ENCODE measurements at regions of chr9 and their contacts with region 1.

Region 1: GRCh38 chr9:32384364-32385151 is at the start of gene ACO1:
- DNase-seq: peak; percentile 77 to 89 (median 84)
- H3K4me3 ChIP-seq: peak within 1 kb of the TSS; percentile 79 to 91
- H3K4me3 Mint-ChIP-seq: peak within 1 kb of the TSS; percentile 81 to 90 (median 88)
- H3K27ac ChIP-seq: peak within 1 kb of the TSS; percentile 55
- H3K27ac Mint-ChIP-seq: peak within 1 kb of the TSS in 6 of 7 donors; percentile 3 to 83 (median 58)
- H3K4me1 ChIP-seq: peaks cover 20% of the 10 kb centered on the region
- H3K4me1 Mint-ChIP-seq: peaks cover 12 to 20% (median 17%) of the 10 kb centered on the region in 4 donors
- H3K27me3 ChIP-seq: no peaks in the 10 kb centered on the region
- H3K27me3 Mint-ChIP-seq: peaks cover 3 to 7% of the 10 kb centered on the region in 2 donors
- total RNA-seq, gene ACO1: 7.9 to 9.1 TPM

Region 2: DNA sequence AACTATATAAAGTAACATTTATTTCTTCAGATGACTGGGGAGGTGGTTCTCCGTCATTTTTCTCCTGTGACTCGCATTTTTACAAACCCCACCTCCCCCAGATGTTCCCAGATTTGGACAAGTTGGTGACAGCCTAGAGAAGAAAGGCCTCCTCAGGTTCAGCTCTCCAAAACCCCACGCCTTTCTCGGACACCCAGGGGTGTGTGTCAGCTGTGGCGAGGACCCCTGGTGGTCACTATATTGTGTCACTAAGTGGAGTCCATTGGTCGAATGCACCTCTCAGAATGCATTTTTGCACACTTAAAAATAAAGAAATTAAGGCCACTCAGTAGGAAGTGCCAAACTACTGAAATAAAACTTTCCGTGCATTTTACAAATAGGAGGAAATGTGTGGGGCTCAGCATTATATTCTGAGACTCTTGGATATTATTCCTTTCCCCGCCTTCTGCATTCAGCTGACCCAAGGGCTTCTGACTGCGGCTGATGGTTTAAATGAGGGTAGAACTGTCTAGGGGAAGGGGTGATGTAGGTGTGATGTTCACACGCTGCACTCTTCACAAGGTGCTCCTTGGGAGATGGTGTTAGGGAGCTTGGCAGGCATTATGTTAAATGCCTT is 47.5 kb after region 1 on chr9:
- CTCF ChIA-PET with region 1: interaction called, 105 read pairs
- POLR2A ChIA-PET with region 1: interaction called, 3 read pairs
- intact Hi-C with region 1: loop called (anchors 1 kb)
- DNase-seq: peak in 4 of 5 donors; percentile 9 to 15 (median 12)
- H3K4me3 ChIP-seq: no peak overlapping the region
- H3K4me3 Mint-ChIP-seq: no peak overlapping the region
- H3K27ac ChIP-seq: no peak overlapping the region
- H3K27ac Mint-ChIP-seq: no peak overlapping the region
- H3K4me1 ChIP-seq: no peaks in the 10 kb centered on the region
- H3K4me1 Mint-ChIP-seq: peaks cover 0 to 4% (median 2%) of the 10 kb centered on the region in 4 donors
- H3K27me3 ChIP-seq: no peaks in the 10 kb centered on the region
- H3K27me3 Mint-ChIP-seq: no peaks in the 10 kb centered on the region

Region 3: DNA sequence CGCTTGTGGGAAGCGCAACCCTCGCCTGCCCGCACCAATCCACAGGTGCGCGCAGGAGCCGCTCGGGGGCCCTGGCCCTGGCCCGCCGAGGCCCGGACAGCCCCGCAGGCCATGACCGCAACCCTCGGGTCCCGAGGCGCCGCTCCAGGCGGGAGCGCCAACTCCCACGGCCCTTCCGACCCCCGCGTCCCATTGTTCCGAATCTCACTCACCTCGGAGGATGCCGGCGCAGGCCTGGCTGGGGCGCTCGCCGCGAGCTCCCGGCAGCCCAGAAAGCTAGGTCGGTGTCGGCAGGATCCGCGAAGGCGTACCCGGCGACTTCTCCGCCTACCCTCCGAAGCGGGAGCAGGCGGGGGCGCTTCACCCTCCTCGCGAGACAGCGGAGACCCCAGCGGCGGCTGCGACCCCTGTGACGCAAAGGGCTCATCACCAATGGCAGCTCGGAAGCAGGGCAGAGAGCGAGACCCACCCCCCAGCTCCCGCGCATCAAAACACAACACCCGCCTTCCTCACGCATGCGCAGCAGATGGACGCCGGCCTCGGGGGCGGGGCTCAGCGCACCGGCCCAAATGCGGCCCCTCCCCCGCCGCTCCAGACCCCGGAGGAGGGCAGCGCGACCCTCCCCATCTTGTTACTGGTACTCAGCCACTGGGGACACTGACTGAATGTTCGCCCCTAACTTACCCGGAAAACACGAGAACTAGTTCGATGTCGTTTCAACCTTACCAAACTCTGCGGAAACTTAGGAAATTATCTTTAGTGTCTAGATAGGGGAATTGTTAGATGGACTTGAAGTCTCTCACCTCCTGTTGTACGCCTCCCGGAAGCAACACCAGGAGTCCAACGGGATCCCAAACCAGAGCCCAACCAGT is 166.2 kb after region 1 on chr9:
- CTCF ChIA-PET with region 1: interaction called, 43 read pairs
- POLR2A ChIA-PET with region 1: interaction called, 27 read pairs
- intact Hi-C with region 1: loop called (anchors 1 kb)
- DNase-seq: peak; percentile 95 to 99 (median 95)
- H3K4me3 ChIP-seq: peak overlapping the region; percentile 93 to 98
- H3K4me3 Mint-ChIP-seq: peak overlapping the region; percentile 92 to 99 (median 97)
- H3K27ac ChIP-seq: peak overlapping the region; percentile 88
- H3K27ac Mint-ChIP-seq: peak overlapping the region; percentile 92 to 100 (median 98)
- H3K4me1 ChIP-seq: peaks cover 47% of the 10 kb centered on the region
- H3K4me1 Mint-ChIP-seq: peaks cover 28 to 66% (median 49%) of the 10 kb centered on the region in 4 donors
- H3K27me3 ChIP-seq: no peaks in the 10 kb centered on the region
- H3K27me3 Mint-ChIP-seq: no peaks in the 10 kb centered on the region